ENCODE measurements at regions of chr11 and their contacts with region 1.

Region 1: GRCh38 chr11:66328307-66329144 is 7.7 kb downstream of the RIN1 start:
- DNase-seq: peak; percentile 78 to 83
- ATAC-seq: peak; percentile 71 to 87
- H3K4me3 ChIP-seq: no peak overlapping the region
- H3K27ac ChIP-seq: peak overlapping the region; percentile 48 to 88; a peak in 5 of 6 replicates
- H3K4me1 ChIP-seq: peaks cover 37% of the 10 kb centered on the region
- CTCF ChIP-seq: peak; percentile 93
- EP300 ChIP-seq: no peak
- POLR2A ChIP-seq: no peak
- RAD21 ChIP-seq: peak; percentile 83 to 86

Region 2: GRCh38 chr11:66282468-66283386 is 45.8 kb before region 1 on chr11:
- CTCF ChIA-PET with region 1: interaction called, 11 read pairs
- POLR2A ChIA-PET with region 1: no interaction called
- DNase-seq: peak; percentile 89 to 96
- ATAC-seq: peak; percentile 58 to 89
- H3K4me3 ChIP-seq: no peak overlapping the region
- H3K27ac ChIP-seq: peak overlapping the region in 1 of 2 experiments; percentile 55; a peak in 2 of 6 replicates
- H3K4me1 ChIP-seq: peaks cover 32% of the 10 kb centered on the region
- CTCF ChIP-seq: peak; percentile 90
- EP300 ChIP-seq: no peak
- POLR2A ChIP-seq: no peak
- RAD21 ChIP-seq: peak; percentile 51 to 53

Region 3: GRCh38 chr11:66317723-66318599 is 10.6 kb before region 1 on chr11:
- CTCF ChIA-PET with region 1: interaction called, 247 read pairs
- POLR2A ChIA-PET with region 1: interaction called, 42 read pairs
- DNase-seq: no peak
- ATAC-seq: peak; percentile 6 to 19; a peak in 2 of 6 replicates
- H3K4me3 ChIP-seq: no peak overlapping the region
- H3K27ac ChIP-seq: peak overlapping the region; percentile 62 to 79
- H3K4me1 ChIP-seq: peaks cover 23% of the 10 kb centered on the region
- CTCF ChIP-seq: no peak
- EP300 ChIP-seq: no peak
- POLR2A ChIP-seq: no peak
- RAD21 ChIP-seq: no peak

Region 4: DNA sequence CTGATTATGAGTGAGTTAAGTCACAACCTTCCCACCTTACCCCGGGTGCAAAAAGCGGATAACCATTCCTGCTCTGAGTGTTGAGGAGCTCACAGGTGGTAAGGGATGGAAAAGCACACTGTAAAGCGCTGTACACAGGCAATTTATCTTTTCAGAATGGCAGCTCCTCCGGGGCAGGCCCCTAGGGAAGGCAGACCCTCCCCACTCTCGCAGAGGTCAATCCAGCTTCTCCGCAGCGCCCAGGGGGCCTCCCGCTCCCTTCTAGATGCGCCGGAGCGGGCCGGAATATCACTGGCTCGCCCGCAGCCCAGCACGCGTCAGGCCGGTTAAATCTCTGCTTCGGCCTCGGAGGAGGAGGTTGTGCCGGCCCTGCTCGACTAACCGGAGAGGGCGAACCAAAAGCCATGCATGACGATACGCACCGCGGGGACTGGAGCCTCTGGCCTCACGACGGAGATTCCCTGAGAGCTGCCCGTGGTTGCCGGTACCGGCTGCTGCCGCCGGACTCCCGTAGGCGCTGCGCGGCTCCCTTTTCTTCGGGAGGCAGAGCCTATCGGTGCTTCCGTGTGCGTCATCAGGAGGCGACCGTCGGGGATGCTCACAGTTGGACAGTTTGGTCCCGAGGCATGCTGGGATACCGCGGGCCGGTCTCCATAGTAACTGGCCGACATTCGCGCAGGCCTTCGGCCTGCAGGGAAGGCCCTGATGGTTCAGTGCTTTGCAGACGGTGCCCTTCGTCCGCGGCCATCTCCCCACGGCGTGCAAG is 16.2 kb after region 1 on chr11 and contains the start of gene BRMS1:
- CTCF ChIA-PET with region 1: interaction called, 37 read pairs
- POLR2A ChIA-PET with region 1: interaction called, 3 read pairs
- DNase-seq: peak; percentile 94 to 98
- ATAC-seq: peak; percentile 66 to 85
- H3K4me3 ChIP-seq: peak within 1 kb of the TSS; percentile 88
- H3K27ac ChIP-seq: peak within 1 kb of the TSS; percentile 77 to 93
- H3K4me1 ChIP-seq: peaks cover 32% of the 10 kb centered on the region
- CTCF ChIP-seq: no peak
- EP300 ChIP-seq: no peak
- POLR2A ChIP-seq: peak; percentile 97
- RAD21 ChIP-seq: no peak
- polyA plus RNA-seq, gene BRMS1: 47.4 and 56.2 TPM in 2 replicates